Activated CD8-positive, alpha-beta T cell treated with anti-CD3 and anti-CD28 coated beads for 36 hours (primary cell): ENCODE measurements at regions of chr2 and their contacts with region 1.

Region 1: GRCh38 chr2:120174963-120175581 is 48.1 kb downstream of the TMEM185B start:
- DNase-seq: no peak
- ATAC-seq: no peak
- H3K4me3 Mint-ChIP-seq: no peak overlapping the region
- H3K27ac Mint-ChIP-seq: peak overlapping the region; percentile 69
- H3K4me1 Mint-ChIP-seq: peaks cover 44% of the 10 kb centered on the region
- H3K27me3 Mint-ChIP-seq: no peaks in the 10 kb centered on the region
- CTCF ChIP-seq: peak; percentile 93

Region 2: DNA sequence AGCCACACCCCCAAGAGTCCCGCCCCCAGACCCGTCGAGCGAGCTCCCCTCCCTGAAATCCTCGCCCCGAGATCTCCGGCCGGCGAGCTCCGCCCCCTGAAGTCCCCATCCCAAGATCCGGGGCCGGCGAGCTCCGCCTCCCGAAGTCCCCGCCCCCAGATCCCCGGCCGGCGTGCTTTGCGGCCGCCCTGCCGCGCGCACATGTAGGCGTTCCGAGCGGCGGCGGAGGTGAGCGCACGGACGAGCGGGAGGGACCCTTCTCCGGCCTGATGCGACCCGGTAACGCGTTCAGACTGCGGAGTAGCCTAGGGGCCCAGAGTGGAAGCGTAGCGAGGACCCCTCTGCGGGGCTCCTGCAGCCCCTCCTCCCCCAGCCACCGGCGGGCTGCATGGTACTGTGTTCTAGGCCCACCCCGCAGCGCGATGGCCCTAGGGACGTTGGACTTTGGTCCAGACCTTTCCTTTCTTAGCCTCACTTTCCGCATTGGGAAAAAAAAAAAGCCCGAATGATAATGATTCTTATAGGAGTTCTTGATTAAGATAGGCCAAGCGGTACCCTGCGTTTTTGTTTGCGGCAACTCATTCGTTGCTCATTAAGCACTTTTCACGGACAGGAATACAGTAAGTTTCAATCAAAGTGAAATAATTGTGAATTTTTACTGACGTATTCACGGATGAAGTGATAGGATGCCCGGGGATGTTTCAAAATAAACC is 495.9 kb before region 1 on chr2 and contains the start of gene TMEM177:
- CTCF ChIA-PET with region 1: interaction called, 19 read pairs
- POLR2A ChIA-PET with region 1: interaction called, 3 read pairs
- intact Hi-C with region 1: no loop called
- DNase-seq: peak; percentile 90
- ATAC-seq: peak; percentile 96
- H3K4me3 Mint-ChIP-seq: peak within 1 kb of the TSS; percentile 99
- H3K27ac Mint-ChIP-seq: peak within 1 kb of the TSS; percentile 95
- H3K4me1 Mint-ChIP-seq: peaks cover 39% of the 10 kb centered on the region
- H3K27me3 Mint-ChIP-seq: no peaks in the 10 kb centered on the region
- CTCF ChIP-seq: no peak
- total RNA-seq, gene TMEM177: 13.1 to 14.6 TPM

Region 3: GRCh38 chr2:119746836-119747686 is 428.0 kb before region 1 on chr2:
- CTCF ChIA-PET with region 1: interaction called, 13 read pairs
- POLR2A ChIA-PET with region 1: no interaction called
- intact Hi-C with region 1: no loop called
- DNase-seq: no peak
- ATAC-seq: no peak
- H3K4me3 Mint-ChIP-seq: no peak overlapping the region
- H3K27ac Mint-ChIP-seq: no peak overlapping the region
- H3K4me1 Mint-ChIP-seq: no peaks in the 10 kb centered on the region
- H3K27me3 Mint-ChIP-seq: peaks cover 7% of the 10 kb centered on the region
- CTCF ChIP-seq: no peak

Region 4: GRCh38 chr2:120012771-120013596 is 162.1 kb before region 1 on chr2 and contains the start of gene EPB41L5:
- CTCF ChIA-PET with region 1: interaction called, 8 read pairs
- POLR2A ChIA-PET with region 1: no interaction called
- intact Hi-C with region 1: loop called (anchors 5 kb)
- DNase-seq: peak; percentile 88
- ATAC-seq: peak; percentile 96
- H3K4me3 Mint-ChIP-seq: peak within 1 kb of the TSS; percentile 70
- H3K27ac Mint-ChIP-seq: peak within 1 kb of the TSS; percentile 29
- H3K4me1 Mint-ChIP-seq: peaks cover 14% of the 10 kb centered on the region
- H3K27me3 Mint-ChIP-seq: no peaks in the 10 kb centered on the region
- CTCF ChIP-seq: no peak
- total RNA-seq, gene EPB41L5: 3.9 TPM

Region 5: DNA sequence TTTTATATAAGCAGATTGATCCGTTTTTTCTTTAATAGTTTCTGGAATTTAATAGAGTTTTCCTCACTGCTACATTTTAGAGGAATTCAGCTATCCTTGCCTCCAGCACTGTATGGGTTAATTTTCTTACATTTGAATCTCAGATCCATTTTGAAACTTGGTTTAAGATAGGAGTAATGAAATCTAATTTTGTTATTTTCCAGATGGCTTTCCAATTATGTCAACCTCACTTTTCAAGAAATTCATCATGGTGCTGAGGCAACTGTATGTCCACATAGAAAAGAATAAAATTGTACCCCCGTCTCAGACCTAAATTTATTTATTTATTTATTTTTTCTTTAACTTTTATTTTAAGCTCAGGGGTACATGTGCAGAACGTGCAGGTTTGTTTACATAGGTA is 57.1 kb before region 1 on chr2:
- CTCF ChIA-PET with region 1: interaction called, 14 read pairs
- POLR2A ChIA-PET with region 1: no interaction called
- intact Hi-C with region 1: no loop called
- DNase-seq: no peak
- ATAC-seq: no peak
- H3K4me3 Mint-ChIP-seq: no peak overlapping the region
- H3K27ac Mint-ChIP-seq: no peak overlapping the region
- H3K4me1 Mint-ChIP-seq: peaks cover 2% of the 10 kb centered on the region
- H3K27me3 Mint-ChIP-seq: peaks cover 2% of the 10 kb centered on the region
- CTCF ChIP-seq: no peak

Region 6: GRCh38 chr2:120162716-120163115 is 12.4 kb before region 1 on chr2:
- CTCF ChIA-PET with region 1: interaction called, 18 read pairs
- POLR2A ChIA-PET with region 1: no interaction called
- intact Hi-C with region 1: no loop called
- DNase-seq: no peak
- ATAC-seq: no peak
- H3K4me3 Mint-ChIP-seq: no peak overlapping the region
- H3K27ac Mint-ChIP-seq: no peak overlapping the region
- H3K4me1 Mint-ChIP-seq: no peaks in the 10 kb centered on the region
- H3K27me3 Mint-ChIP-seq: no peaks in the 10 kb centered on the region
- CTCF ChIP-seq: no peak

Region 7: GRCh38 chr2:120312861-120313694 is 138.0 kb after region 1 on chr2:
- CTCF ChIA-PET with region 1: interaction called, 79 read pairs
- POLR2A ChIA-PET with region 1: interaction called, 3 read pairs
- intact Hi-C with region 1: no loop called
- DNase-seq: peak; percentile 86
- ATAC-seq: peak; percentile 77
- H3K4me3 Mint-ChIP-seq: peak overlapping the region; percentile 61
- H3K27ac Mint-ChIP-seq: peak overlapping the region; percentile 16
- H3K4me1 Mint-ChIP-seq: peaks cover 19% of the 10 kb centered on the region
- H3K27me3 Mint-ChIP-seq: no peaks in the 10 kb centered on the region
- CTCF ChIP-seq: peak; percentile 86

Region 8: DNA sequence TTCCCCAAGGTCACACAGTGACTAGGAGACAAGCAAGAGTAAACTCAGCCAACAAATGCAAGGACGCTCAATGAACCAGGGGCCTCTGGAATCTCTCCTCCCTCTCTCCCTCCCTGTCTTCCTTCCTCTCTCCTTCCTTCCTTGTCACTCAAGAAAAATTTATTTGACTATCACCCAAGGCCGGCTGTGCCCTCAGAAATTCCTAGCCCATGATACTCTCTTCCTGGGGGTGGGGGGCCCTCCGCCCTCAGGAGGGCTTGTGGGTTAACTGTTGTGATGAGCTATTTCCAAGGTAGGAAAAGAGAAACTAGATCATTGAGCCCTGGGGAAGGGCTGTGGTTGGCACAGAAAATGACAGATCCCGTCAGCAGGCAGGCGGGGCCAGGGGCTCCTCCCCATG is 192.6 kb after region 1 on chr2:
- CTCF ChIA-PET with region 1: no interaction called
- POLR2A ChIA-PET with region 1: no interaction called
- intact Hi-C with region 1: no loop called
- DNase-seq: no peak
- ATAC-seq: no peak
- H3K4me3 Mint-ChIP-seq: no peak overlapping the region
- H3K27ac Mint-ChIP-seq: no peak overlapping the region
- H3K4me1 Mint-ChIP-seq: no peaks in the 10 kb centered on the region
- H3K27me3 Mint-ChIP-seq: no peaks in the 10 kb centered on the region
- CTCF ChIP-seq: no peak